ENCODE measurements at regions of chr17 and their contacts with region 1.

Region 1: DNA sequence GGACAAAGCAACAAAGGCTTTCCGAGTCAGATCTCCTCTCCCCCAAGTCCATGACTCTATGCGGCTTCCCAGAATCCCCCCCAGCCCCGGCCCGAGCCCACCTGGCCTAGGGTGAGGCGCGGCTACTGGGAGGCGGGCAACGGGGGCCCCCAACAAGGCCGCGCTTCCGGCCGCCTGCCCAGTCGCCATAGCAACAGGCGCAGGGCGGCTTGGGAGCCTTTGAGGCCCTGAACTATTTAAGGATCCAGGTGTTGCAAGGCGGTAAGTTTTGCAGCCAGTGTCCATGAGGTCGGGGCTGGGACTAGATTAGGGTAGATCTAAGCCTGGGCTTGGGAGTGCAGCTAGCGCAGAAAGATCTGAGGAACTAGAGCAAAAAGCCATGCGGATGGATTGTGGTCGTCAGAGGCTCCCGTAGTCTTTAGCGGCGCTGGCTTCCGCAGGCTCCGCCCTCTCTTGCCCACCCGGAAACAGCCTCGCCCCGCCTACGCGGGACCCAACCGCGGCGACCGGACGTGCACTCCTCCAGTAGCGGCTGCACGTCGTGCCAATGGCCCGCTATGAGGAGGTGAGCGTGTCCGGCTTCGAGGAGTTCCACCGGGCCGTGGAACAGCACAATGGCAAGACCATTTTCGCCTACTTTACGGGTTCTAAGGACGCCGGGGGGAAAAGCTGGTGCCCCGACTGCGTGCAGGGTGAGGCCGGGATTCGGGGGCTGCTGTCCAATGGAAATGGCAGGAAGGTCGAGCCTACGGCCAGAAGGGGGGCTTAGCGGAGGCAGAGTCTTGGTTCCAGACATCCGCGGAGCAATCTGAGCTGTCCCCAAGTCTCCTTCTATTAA is at the starts of genes KIAA0753 and TXNDC17:
- DNase-seq: peak; percentile 75 to 97 (median 85)
- ATAC-seq: peak; percentile 94
- H3K4me3 ChIP-seq: peak within 1 kb of the TSS; percentile 91
- H3K4me3 Mint-ChIP-seq: peak within 1 kb of the TSS; percentile 90 to 98 (median 96)
- H3K27ac ChIP-seq: peak within 1 kb of the TSS; percentile 86
- H3K27ac Mint-ChIP-seq: peak within 1 kb of the TSS; percentile 88 to 99 (median 97)
- H3K4me1 ChIP-seq: peaks cover 17 to 24% of the 10 kb centered on the region in 2 donors
- H3K4me1 Mint-ChIP-seq: peaks cover 35 to 64% (median 48%) of the 10 kb centered on the region in 7 donors
- H3K27me3 ChIP-seq: no peaks in the 10 kb centered on the region
- H3K27me3 Mint-ChIP-seq: no peaks in the 10 kb centered on the region
- total RNA-seq, gene KIAA0753: 12.4 to 18.4 (median 17.9) TPM
- total RNA-seq, gene TXNDC17: 14.3 to 70.3 (median 18.5) TPM

Region 2: DNA sequence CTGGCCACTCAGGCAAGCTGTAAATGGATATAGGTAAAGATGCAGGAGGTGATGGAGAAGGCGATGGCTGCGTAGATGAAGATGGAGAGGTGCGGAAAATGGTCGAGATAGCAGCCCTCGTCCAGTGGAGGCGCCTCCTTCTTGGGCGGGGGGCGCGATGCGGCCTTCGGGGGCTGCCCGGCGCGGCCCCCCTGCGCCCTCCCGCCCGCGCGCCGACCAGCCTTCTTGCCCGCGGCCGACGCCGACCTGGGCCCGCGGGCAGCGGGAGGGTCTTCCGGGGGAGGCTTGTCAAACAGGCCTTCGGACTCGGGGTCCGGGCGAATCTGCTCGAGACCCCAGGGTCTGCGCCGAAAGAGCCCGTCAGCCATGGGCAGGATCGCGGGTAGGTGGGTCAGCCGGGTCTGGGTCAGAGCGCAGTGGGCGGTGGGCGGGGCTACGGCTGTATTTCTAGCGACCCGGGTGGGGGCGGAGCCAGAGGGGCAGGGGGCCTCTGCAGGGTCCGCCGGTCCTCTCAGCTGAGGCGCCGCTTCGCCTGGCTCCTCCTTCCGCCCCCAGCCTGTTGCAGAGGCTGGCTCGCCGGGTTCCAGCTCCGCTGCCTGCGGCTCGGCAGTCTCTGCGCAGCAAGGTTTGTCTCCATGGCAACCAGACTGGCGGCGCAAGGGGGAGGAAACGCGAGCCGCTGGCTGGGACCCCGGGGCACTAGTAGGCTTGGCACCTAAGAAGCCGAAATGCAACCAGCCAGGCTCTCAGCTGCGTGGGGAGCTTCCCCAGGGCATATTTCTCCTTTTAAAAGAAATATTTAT is 1140.0 kb before region 1 on chr17:
- CTCF ChIA-PET with region 1: no interaction called
- POLR2A ChIA-PET with region 1: no interaction called
- intact Hi-C with region 1: loop called in 1 of 2 experiments (anchors 5 kb)
- DNase-seq: peak; percentile 54 to 85 (median 75)
- ATAC-seq: peak; percentile 94
- H3K4me3 ChIP-seq: peak overlapping the region; percentile 45
- H3K4me3 Mint-ChIP-seq: peak overlapping the region; percentile 91 to 99 (median 97)
- H3K27ac ChIP-seq: peak overlapping the region; percentile 69
- H3K27ac Mint-ChIP-seq: peak overlapping the region; percentile 69 to 99 (median 88)
- H3K4me1 ChIP-seq: peaks cover 0 to 6% of the 10 kb centered on the region in 2 donors
- H3K4me1 Mint-ChIP-seq: peaks cover 7 to 30% (median 24%) of the 10 kb centered on the region in 7 donors
- H3K27me3 ChIP-seq: no peaks in the 10 kb centered on the region
- H3K27me3 Mint-ChIP-seq: peaks cover 0 to 7% (median 0%) of the 10 kb centered on the region in 5 donors

Region 3: DNA sequence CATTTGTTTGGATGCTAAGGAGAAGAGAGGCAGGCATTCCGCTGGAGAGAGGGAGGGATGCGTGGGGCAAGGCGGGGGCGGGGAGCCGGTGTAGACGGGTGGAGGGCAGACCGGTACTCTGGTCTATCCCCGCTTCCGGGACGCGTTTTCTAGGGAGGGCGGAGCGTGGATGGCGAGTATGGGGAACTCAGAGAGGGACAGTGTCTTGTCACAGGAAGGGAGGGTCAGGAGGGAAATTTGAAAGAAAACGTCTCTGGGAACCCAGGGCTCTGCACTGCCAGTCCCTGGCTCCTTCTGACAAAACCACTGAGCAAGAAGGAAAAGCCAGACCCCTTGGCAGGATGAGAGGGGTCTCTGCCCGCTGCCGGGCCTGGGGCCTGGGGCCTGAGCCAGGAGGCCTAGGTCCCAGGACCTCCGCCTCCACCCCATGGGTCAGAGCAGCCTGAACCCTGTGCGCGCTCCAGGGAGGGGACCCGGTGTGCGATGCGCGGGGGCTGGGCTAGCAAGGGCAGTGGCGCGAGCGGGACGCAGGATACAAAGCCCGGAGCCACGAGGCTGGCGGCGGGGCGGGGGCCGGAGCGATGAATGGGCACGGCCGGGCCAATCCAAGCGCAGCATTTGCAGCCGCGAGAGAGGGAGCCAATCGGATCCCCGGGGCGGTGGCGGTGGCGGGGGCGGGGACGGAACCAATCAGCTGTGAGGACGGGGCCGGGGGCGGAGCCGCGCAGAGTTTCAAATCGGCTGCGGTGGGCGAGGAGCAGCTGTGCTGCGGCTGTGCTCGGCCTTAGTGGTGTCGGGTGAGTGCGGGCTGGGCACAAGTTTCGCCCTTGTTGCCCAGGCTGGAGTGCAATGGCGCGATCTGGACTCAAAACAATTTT is 196.8 kb before region 1 on chr17 and contains the start of gene PIMREG:
- CTCF ChIA-PET with region 1: no interaction called
- POLR2A ChIA-PET with region 1: no interaction called
- intact Hi-C with region 1: loop called (anchors 10 kb)
- DNase-seq: peak; percentile 74 to 93 (median 84)
- ATAC-seq: peak; percentile 98
- H3K4me3 ChIP-seq: peak within 1 kb of the TSS; percentile 77
- H3K4me3 Mint-ChIP-seq: peak within 1 kb of the TSS; percentile 85 to 98 (median 92)
- H3K27ac ChIP-seq: peak within 1 kb of the TSS; percentile 56
- H3K27ac Mint-ChIP-seq: peak within 1 kb of the TSS in 8 of 9 donors; percentile 63 to 93 (median 84)
- H3K4me1 ChIP-seq: peaks cover 5 to 6% of the 10 kb centered on the region in 2 donors
- H3K4me1 Mint-ChIP-seq: peaks cover 10 to 15% (median 13%) of the 10 kb centered on the region in 7 donors
- H3K27me3 ChIP-seq: no peaks in the 10 kb centered on the region
- H3K27me3 Mint-ChIP-seq: peaks cover 0 to 39% (median 0%) of the 10 kb centered on the region in 5 donors
- total RNA-seq, gene PIMREG: 0.49 to 18.6 TPM in 2 of 5 experiments, not detected in the others

Region 4: DNA sequence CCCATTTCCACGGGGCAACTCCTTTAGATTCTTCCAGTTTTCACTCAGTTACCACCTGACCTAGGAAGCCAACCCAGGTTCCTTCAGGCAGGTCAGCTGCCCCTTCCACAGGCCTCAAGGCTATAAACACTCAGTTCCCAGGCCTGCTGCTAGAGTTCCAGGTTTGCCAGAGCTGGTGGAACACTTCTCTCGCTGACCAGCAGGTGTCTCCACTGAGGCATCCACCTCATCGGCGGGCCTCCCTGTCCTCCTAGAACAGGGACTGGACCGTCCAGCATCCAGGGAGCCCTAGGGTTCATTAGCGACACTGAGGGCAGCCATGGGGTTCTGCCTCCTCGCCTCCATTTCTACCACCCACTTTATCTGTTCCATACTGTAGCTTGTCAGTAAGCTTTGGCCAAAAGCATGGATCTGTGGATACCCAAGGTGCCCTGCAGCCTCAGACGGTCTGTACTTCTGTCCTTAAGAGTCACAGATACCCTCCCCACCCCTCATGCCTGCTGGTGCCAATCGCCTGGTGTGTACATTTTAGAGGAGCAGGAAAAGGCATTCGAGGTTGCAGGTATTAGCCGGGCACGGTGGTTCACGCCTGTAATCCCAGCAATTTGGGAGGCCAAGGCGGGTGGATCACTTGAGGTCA is 167.5 kb before region 1 on chr17:
- CTCF ChIA-PET with region 1: interaction called, 3 read pairs
- POLR2A ChIA-PET with region 1: no interaction called
- intact Hi-C with region 1: loop called in 1 of 2 experiments (anchors 2 kb)
- DNase-seq: peak; percentile 16 to 68 (median 57)
- ATAC-seq: peak; percentile 85
- H3K4me3 ChIP-seq: no peak overlapping the region
- H3K4me3 Mint-ChIP-seq: no peak overlapping the region
- H3K27ac ChIP-seq: no peak overlapping the region
- H3K27ac Mint-ChIP-seq: peak overlapping the region in 3 of 9 donors; percentile 22 to 62 (median 47)
- H3K4me1 ChIP-seq: no peaks in the 10 kb centered on the region
- H3K4me1 Mint-ChIP-seq: peaks cover 1 to 6% (median 4%) of the 10 kb centered on the region in 7 donors
- H3K27me3 ChIP-seq: no peaks in the 10 kb centered on the region
- H3K27me3 Mint-ChIP-seq: peaks cover 0 to 6% (median 0%) of the 10 kb centered on the region in 5 donors

Region 5: DNA sequence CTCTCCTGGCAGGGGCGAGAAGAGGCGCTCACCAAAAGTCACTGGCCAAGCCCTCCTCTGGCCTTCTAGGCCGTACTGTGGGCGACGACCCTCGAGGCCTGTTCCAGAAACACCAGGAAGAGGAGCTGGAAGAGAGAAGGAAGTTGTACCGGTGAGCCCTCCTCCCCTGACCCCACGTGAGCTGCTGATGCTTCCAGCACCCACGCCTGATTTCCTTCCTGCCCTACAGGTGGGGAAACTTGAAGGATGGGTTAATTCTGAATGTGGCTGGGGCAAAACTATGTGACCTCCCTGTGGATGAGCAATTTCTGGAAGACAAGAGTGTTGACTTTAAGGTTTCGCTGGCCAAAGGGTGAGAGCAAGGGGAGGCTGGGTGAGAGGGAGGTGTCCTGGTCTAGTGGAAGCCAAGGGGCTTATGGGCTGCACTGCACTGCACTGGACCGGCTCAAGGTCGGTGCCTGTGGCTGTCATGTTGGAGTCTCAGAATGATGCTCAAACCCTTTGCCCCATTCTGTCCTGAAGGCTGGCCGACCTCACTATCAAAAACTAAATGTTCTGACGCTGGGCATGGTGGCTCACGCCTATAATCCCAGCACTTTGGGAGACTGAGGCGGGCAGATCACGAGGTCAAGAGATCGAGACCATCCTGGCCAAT is 17.0 kb after region 1 on chr17:
- CTCF ChIA-PET with region 1: no interaction called
- POLR2A ChIA-PET with region 1: interaction called, 9 read pairs
- intact Hi-C with region 1: loop called in 1 of 2 experiments (anchors 2 kb)
- DNase-seq: no peak
- ATAC-seq: no peak
- H3K4me3 ChIP-seq: peak overlapping the region; percentile 67
- H3K4me3 Mint-ChIP-seq: peak overlapping the region; percentile 84 to 98 (median 93)
- H3K27ac ChIP-seq: peak overlapping the region; percentile 70
- H3K27ac Mint-ChIP-seq: peak overlapping the region in 8 of 9 donors; percentile 71 to 95 (median 92)
- H3K4me1 ChIP-seq: peaks cover 7 to 21% of the 10 kb centered on the region in 2 donors
- H3K4me1 Mint-ChIP-seq: peaks cover 34 to 70% (median 55%) of the 10 kb centered on the region in 7 donors
- H3K27me3 ChIP-seq: no peaks in the 10 kb centered on the region
- H3K27me3 Mint-ChIP-seq: peaks cover 0 to 38% (median 0%) of the 10 kb centered on the region in 5 donors

Measured in naive thymus-derived CD4-positive, alpha-beta T cell (primary cell).